MCF 10A (cell line): ENCODE measurements at regions of chr17 and their contacts with region 1.

Region 1: GRCh38 chr17:44186307-44187130 is at the start of gene TMUB2:
- DNase-seq: peak; percentile 98
- H3K4me3 Mint-ChIP-seq: peak within 1 kb of the TSS; percentile 100
- H3K27ac Mint-ChIP-seq: peak within 1 kb of the TSS; percentile 99
- H3K4me1 Mint-ChIP-seq: peaks cover 17% of the 10 kb centered on the region
- H3K27me3 Mint-ChIP-seq: no peaks in the 10 kb centered on the region
- CTCF ChIP-seq: no peak
- total RNA-seq, gene TMUB2: 26.5 and 37.7 TPM in 2 replicates

Region 2: DNA sequence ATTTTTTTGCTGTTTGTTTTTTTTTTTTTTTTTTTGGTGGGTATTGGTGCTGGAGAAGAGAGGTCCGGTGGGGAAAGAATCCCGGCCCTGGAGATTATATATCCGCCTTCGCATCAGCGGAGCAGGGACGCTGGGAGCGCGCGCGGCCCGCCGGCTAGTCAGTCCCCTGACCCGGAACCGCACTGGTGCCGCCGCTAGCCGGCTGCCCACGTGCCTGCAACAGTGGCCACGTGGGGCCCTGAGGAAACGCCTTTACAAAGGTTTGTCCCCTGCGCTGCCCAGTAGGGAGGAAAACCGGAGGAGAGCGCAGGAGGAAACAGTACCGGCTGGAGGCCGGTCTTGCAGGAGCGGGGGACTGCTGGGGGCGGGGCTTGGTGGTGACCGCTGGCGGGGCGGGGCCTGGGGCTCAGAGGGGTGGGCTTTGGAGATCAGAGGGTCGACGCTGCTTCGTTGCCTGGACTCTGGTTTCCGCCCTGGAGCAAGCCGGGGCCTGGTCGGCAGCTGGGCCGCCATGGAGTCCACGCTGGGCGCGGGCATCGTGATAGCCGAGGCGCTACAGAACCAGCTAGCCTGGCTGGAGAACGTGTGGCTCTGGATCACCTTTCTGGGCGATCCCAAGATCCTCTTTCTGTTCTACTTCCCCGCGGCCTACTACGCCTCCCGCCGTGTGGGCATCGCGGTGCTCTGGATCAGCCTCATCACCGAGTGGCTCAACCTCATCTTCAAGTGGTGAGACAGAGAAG is 115.9 kb before region 1 on chr17 and contains the start of gene G6PC3:
- CTCF ChIA-PET with region 1: no interaction called
- POLR2A ChIA-PET with region 1: interaction called, 18 read pairs
- intact Hi-C with region 1: no loop called
- DNase-seq: peak; percentile 98
- H3K4me3 Mint-ChIP-seq: peak within 1 kb of the TSS; percentile 92
- H3K27ac Mint-ChIP-seq: peak within 1 kb of the TSS; percentile 97
- H3K4me1 Mint-ChIP-seq: peaks cover 26% of the 10 kb centered on the region
- H3K27me3 Mint-ChIP-seq: no peaks in the 10 kb centered on the region
- CTCF ChIP-seq: no peak
- total RNA-seq, gene G6PC3: 70.6 and 89.4 TPM in 2 replicates

Region 3: DNA sequence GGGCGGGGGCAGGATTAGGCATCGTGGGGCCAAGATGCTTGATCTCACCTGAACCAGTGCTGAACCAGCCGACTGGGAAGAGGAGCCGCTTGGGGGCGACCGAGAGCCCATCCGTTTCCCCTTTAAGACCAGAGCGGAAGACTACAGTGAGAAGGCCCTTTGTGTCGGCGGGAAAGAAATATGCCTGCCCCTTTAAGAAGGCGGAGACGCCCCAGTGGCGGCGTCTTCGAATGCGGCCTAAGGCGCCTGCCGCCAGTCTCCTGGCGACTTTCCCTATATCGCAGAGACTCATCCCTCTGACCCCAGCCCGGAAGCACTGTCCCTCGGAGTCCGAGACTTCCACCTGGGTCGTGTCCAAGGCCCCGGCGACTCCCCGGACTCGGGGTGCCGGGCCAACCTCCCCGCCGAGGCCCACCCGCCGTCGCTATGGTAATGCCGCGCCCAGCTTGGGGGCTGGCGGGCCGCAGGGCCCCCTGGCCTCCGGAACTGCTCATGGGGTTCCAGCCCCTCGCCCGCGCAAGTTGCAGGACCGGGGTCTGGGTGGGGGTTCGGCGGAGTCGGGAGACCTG is 44.7 kb before region 1 on chr17 and contains the start of gene HROB:
- CTCF ChIA-PET with region 1: no interaction called
- POLR2A ChIA-PET with region 1: interaction called, 29 read pairs
- intact Hi-C with region 1: no loop called
- DNase-seq: peak; percentile 98
- H3K4me3 Mint-ChIP-seq: peak within 1 kb of the TSS; percentile 78
- H3K27ac Mint-ChIP-seq: peak within 1 kb of the TSS; percentile 93
- H3K4me1 Mint-ChIP-seq: peaks cover 26% of the 10 kb centered on the region
- H3K27me3 Mint-ChIP-seq: no peaks in the 10 kb centered on the region
- CTCF ChIP-seq: peak; percentile 84
- total RNA-seq, gene HROB: 5.4 and 6.7 TPM in 2 replicates

Region 4: GRCh38 chr17:44170499-44171201 is 15.9 kb before region 1 on chr17 and contains the start of gene ASB16:
- CTCF ChIA-PET with region 1: interaction called, 17 read pairs
- POLR2A ChIA-PET with region 1: interaction called, 13 read pairs
- intact Hi-C with region 1: no loop called
- DNase-seq: no peak
- H3K4me3 Mint-ChIP-seq: no peak within 1 kb of the TSS
- H3K27ac Mint-ChIP-seq: no peak within 1 kb of the TSS
- H3K4me1 Mint-ChIP-seq: peaks cover 11% of the 10 kb centered on the region
- H3K27me3 Mint-ChIP-seq: no peaks in the 10 kb centered on the region
- CTCF ChIP-seq: no peak
- total RNA-seq, gene ASB16: not detected in 2 replicates

Region 5: GRCh38 chr17:44218344-44219107 is 32.0 kb after region 1 on chr17:
- CTCF ChIA-PET with region 1: interaction called, 5 read pairs
- POLR2A ChIA-PET with region 1: interaction called, 44 read pairs
- intact Hi-C with region 1: loop called (anchors 1 kb)
- DNase-seq: peak; percentile 92
- H3K4me3 Mint-ChIP-seq: peak overlapping the region; percentile 76
- H3K27ac Mint-ChIP-seq: peak overlapping the region; percentile 87
- H3K4me1 Mint-ChIP-seq: peaks cover 26% of the 10 kb centered on the region
- H3K27me3 Mint-ChIP-seq: no peaks in the 10 kb centered on the region
- CTCF ChIP-seq: peak; percentile 67

Region 6: GRCh38 chr17:44344939-44345453 is 158.5 kb after region 1 on chr17 and contains the start of gene GRN:
- CTCF ChIA-PET with region 1: no interaction called
- POLR2A ChIA-PET with region 1: interaction called, 15 read pairs
- intact Hi-C with region 1: no loop called
- DNase-seq: peak; percentile 99
- H3K4me3 Mint-ChIP-seq: peak within 1 kb of the TSS; percentile 82
- H3K27ac Mint-ChIP-seq: peak within 1 kb of the TSS; percentile 94
- H3K4me1 Mint-ChIP-seq: peaks cover 12% of the 10 kb centered on the region
- H3K27me3 Mint-ChIP-seq: no peaks in the 10 kb centered on the region
- CTCF ChIP-seq: no peak
- total RNA-seq, gene GRN: 143 and 144 TPM in 2 replicates